ENCODE measurements at regions of chr3 and their contacts with region 1.

Region 1: GRCh38 chr3:141746962-141747361 is 8.9 kb downstream of the RNF7 start:
- DNase-seq: no peak
- ATAC-seq: no peak
- H3K4me3 ChIP-seq: no peak overlapping the region
- H3K27ac ChIP-seq: no peak overlapping the region
- H3K4me1 ChIP-seq: peaks cover 18 to 19% of the 10 kb centered on the region in 2 donors
- H3K27me3 ChIP-seq: no peaks in the 10 kb centered on the region
- CTCF ChIP-seq: no peak
- POLR2A ChIP-seq: no peak

Region 2: DNA sequence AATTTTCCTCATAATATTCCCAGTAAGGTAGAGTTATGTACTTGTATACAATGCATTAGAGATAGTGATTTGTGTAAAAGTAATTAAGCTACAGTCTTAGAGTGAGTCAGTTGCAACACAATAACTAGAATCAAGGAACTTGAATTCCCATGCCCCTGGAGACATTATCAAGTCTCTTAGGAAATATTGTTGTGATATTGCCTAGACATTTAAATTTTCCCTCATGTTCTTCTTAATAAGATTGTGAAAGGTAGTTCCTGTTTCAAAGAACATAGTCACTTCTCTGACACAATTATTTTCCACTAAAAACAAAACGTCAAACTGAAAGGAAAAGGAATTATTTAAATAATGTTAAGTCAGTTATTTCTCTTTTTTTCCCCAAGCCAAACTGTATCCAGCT is 116.5 kb after region 1 on chr3:
- in situ Hi-C with region 1: loop called in 1 of 4 experiments (anchors 10 kb)
- intact Hi-C with region 1: no loop called
- DNase-seq: no peak
- ATAC-seq: no peak
- H3K4me3 ChIP-seq: no peak overlapping the region
- H3K27ac ChIP-seq: no peak overlapping the region
- H3K4me1 ChIP-seq: peaks cover 0 to 13% of the 10 kb centered on the region in 2 donors
- H3K27me3 ChIP-seq: no peaks in the 10 kb centered on the region
- CTCF ChIP-seq: no peak
- POLR2A ChIP-seq: no peak

Region 3: GRCh38 chr3:141875374-141875892 is 128.5 kb after region 1 on chr3:
- in situ Hi-C with region 1: loop called in 2 of 4 experiments (anchors 10 kb)
- intact Hi-C with region 1: no loop called
- DNase-seq: peak; percentile 70 to 72
- ATAC-seq: peak; percentile 79 to 80
- H3K4me3 ChIP-seq: peak overlapping the region; percentile 82 to 99 (median 86)
- H3K27ac ChIP-seq: peak overlapping the region; percentile 96 to 100 (median 98)
- H3K4me1 ChIP-seq: peaks cover 19 to 23% of the 10 kb centered on the region in 2 donors
- H3K27me3 ChIP-seq: no peaks in the 10 kb centered on the region
- CTCF ChIP-seq: peak; percentile 65 to 91 (median 84)
- POLR2A ChIP-seq: no peak

Region 4: GRCh38 chr3:141881702-141882101 is 134.7 kb after region 1 on chr3:
- in situ Hi-C with region 1: loop called in 2 of 4 experiments (anchors 10 kb)
- intact Hi-C with region 1: no loop called
- DNase-seq: no peak
- ATAC-seq: no peak
- H3K4me3 ChIP-seq: no peak overlapping the region
- H3K27ac ChIP-seq: no peak overlapping the region
- H3K4me1 ChIP-seq: peaks cover 16 to 18% of the 10 kb centered on the region in 2 donors
- H3K27me3 ChIP-seq: no peaks in the 10 kb centered on the region
- CTCF ChIP-seq: no peak
- POLR2A ChIP-seq: no peak